Left ventricle myocardium inferior (tissue), 1 donor: ENCODE measurements at regions of chr17 and their contacts with region 1.

Region 1: DNA sequence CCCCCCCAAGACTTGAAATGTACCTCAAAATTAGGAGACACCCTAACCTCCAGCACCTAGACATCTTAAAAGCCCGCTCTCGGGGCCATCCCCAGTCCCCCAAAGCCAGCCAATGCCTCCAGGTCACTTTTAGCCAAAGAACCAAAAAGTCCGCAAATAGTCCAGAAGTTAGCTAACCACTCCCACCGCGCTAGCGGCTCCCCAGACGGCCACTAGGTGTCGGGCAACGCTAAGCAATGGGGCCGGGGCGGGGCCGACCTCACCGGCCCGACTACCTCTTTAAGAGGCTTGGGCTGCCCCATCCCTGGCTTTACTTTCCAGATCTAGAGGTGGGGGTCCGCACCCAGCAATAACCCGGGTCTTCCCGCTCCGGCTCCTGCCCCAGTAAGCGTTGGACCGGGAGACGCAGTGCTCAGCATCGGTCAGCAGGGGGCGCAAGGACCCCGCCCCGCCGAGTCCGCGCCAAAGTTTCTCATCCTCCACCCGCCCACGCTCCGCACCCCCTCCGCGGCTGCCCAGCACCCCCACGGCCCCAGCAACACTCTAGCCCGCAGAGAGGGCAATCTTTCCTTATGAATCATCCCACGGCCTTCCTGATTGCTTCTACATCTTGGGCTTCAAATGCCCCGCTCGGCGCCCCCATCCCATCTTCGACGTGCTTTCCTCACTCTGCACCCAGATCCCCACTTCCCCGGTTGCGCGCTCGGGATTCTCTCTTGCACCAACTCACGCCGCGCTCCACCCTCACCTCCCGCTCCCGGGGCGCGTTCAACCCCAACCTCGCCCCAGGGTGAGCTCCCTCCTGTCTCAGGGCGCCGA is 765 bp downstream of the COL1A1 start:
- DNase-seq: peak; percentile 88
- H3K4me3 ChIP-seq: peak overlapping the region; percentile 72
- H3K27ac ChIP-seq: peak overlapping the region; percentile 88
- H3K4me1 ChIP-seq: peaks cover 48% of the 10 kb centered on the region
- H3K27me3 ChIP-seq: peaks cover 59% of the 10 kb centered on the region
- CTCF ChIP-seq: peak; percentile 99

Region 2: GRCh38 chr17:50013079-50013478 is 187.6 kb before region 1 on chr17:
- intact Hi-C with region 1: no loop called
- DNase-seq: no peak
- H3K4me3 ChIP-seq: no peak overlapping the region
- H3K27ac ChIP-seq: no peak overlapping the region
- H3K4me1 ChIP-seq: no peaks in the 10 kb centered on the region
- H3K27me3 ChIP-seq: peaks cover 33% of the 10 kb centered on the region
- CTCF ChIP-seq: no peak

Region 3: GRCh38 chr17:50269477-50270434 is 69.1 kb after region 1 on chr17:
- intact Hi-C with region 1: loop called (anchors 5 kb)
- DNase-seq: peak; percentile 68
- H3K4me3 ChIP-seq: no peak overlapping the region
- H3K27ac ChIP-seq: peak overlapping the region; percentile 62
- H3K4me1 ChIP-seq: peaks cover 33% of the 10 kb centered on the region
- H3K27me3 ChIP-seq: peaks cover 40% of the 10 kb centered on the region
- CTCF ChIP-seq: peak; percentile 75